ENCODE measurements at regions of chr16 and their contacts with region 1.

Region 1: DNA sequence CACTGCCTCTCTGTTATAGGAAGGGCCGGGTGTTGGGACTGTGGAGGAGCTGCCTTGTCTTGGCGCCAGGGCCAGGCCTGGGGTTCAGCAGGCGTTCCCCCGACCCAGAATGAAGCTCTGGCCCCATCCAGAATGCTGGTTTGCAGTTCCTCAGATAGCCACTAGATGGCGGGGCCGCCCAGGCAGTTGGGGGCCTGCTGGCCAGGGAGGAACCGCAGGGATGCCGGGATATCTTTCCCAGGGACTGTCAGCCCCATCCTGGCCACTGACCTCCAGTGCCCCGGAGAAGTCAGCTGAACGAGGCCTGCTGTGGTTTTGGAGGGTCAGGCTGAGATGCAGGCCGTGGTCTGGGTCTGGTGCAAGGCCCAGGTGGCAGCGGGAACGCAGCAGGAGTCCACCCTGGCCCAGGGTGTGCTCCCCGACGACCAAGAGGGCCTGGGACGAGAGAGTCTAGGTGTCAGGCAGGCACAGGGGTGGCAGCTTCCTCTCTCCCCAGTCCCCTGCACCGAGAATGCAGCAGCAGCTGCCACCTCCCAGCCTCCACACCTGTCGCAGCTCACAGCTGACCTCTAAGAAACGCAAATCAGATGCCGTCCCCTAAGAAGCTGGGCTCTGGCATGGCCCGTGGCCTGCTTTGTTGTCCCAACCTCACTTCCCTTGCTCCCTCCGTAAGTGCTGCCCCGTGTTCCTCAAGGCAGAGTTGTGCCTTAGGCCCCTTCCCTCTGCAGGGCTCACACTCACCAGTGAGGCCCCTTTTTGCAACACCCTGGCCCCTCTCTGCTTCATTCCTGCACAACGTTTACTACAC is 51.2 kb downstream of the RMI2 start:
- DNase-seq: peak; percentile 76 to 86
- H3K4me3 ChIP-seq: no peak overlapping the region
- H3K27ac ChIP-seq: no peak overlapping the region
- H3K4me1 ChIP-seq: peaks cover 0 to 17% (median 11%) of the 10 kb centered on the region in 4 donors
- H3K27me3 ChIP-seq: no peaks in the 10 kb centered on the region
- CTCF ChIP-seq: peak in 6 of 7 experiments; percentile 55 to 99 (median 96)
- EP300 ChIP-seq: no peak
- POLR2A ChIP-seq: no peak

Region 2: GRCh38 chr16:11263737-11264136 is 132.7 kb before region 1 on chr16:
- intact Hi-C with region 1: no loop called
- DNase-seq: peak in 1 of 2 donors; percentile 39
- H3K4me3 ChIP-seq: no peak overlapping the region
- H3K27ac ChIP-seq: no peak overlapping the region
- H3K4me1 ChIP-seq: peaks cover 9 to 37% (median 16%) of the 10 kb centered on the region in 4 donors
- H3K27me3 ChIP-seq: no peaks in the 10 kb centered on the region
- CTCF ChIP-seq: no peak
- EP300 ChIP-seq: no peak
- POLR2A ChIP-seq: no peak

Region 3: DNA sequence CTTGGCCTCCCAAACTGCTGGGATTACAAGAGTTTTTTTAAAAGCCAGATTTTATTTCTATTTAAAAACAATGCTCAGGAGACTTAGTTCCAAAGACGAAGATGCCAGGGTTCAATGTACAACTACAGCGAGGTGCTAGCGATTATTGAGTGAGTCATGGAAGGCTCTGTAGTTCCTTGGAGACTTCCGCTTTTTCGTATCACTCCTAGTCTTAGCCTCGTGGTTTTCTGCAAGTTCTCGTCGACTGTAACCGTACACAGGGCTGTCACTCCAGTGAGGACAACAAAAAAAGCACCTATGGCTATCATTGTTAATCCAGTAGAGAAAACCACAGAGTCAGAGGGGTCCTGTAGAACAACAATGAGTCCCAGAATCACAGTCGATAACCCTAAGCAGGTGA is 423.4 kb after region 1 on chr16:
- intact Hi-C with region 1: loop called (anchors 10 kb)
- DNase-seq: peak in 1 of 2 donors; percentile 27
- H3K4me3 ChIP-seq: no peak overlapping the region
- H3K27ac ChIP-seq: no peak overlapping the region
- H3K4me1 ChIP-seq: peaks cover 0 to 14% (median 7%) of the 10 kb centered on the region in 4 donors
- H3K27me3 ChIP-seq: no peaks in the 10 kb centered on the region
- CTCF ChIP-seq: no peak
- EP300 ChIP-seq: no peak
- POLR2A ChIP-seq: no peak